ENCODE measurements at regions of chr6 and their contacts with region 1.

Region 1: DNA sequence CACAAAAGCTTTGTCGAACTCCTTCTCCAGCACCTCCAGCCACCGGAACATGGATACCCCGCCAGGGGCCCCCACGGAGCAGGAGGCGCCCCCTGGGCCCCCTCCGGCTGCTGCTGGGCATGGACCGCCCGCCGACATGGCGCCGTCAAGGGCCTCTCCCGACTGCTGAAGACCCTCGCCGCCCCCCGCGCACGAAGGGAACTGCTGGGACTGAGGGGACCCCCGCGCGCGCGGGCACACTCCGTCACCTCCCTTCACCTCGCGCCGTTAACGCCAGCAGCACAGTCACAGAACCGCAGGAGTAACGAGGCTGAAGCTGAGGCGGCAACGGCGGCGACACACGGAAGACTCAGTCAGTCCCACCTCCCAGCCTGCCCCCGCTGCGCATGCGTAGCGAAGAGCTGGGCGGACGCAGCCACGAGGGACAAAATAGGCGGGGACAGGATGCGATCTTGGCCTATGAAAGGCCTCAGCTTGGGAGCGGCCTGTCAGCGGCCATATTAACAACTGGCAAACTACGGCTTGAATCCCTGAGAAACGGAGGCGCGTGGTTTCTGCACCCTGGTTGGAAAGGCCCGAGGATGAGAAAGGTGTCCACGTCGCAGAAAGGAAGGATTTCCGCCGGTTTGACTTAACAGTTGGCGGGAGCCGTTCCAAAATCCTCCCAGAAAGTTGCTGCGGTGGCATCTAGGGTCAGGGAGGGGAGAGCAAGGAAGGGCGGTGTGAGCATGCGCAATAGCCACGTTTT is at the start of gene GOPC:
- DNase-seq: peak; percentile 96
- ATAC-seq: peak; percentile 93
- H3K4me3 ChIP-seq: peak within 1 kb of the TSS; percentile 93
- H3K27ac ChIP-seq: peak within 1 kb of the TSS; percentile 92
- H3K4me1 ChIP-seq: peaks cover 21% of the 10 kb centered on the region; the same call in 1 of the 2 replicates
- H3K27me3 ChIP-seq: no peaks in the 10 kb centered on the region
- CTCF ChIP-seq: 0 out of 2 replicates have a peak, but pooled peaks have one; percentile 12
- total RNA-seq, gene GOPC: 15.8 and 17.1 TPM in 2 replicates

Region 2: GRCh38 chr6:117290173-117290846 is 312.0 kb before region 1 on chr6:
- CTCF ChIA-PET with region 1: no interaction called
- POLR2A ChIA-PET with region 1: no interaction called
- intact Hi-C with region 1: no loop called
- DNase-seq: no peak
- ATAC-seq: no peak
- H3K4me3 ChIP-seq: no peak overlapping the region
- H3K27ac ChIP-seq: no peak overlapping the region
- H3K4me1 ChIP-seq: no peaks in the 10 kb centered on the region
- H3K27me3 ChIP-seq: no peaks in the 10 kb centered on the region
- CTCF ChIP-seq: no peak

Region 3: GRCh38 chr6:117346142-117346930 is 256.0 kb before region 1 on chr6:
- CTCF ChIA-PET with region 1: interaction called, 3 read pairs
- POLR2A ChIA-PET with region 1: interaction called, 4 read pairs
- intact Hi-C with region 1: loop called (anchors 1 kb)
- DNase-seq: peak; percentile 69
- ATAC-seq: no peak
- H3K4me3 ChIP-seq: peak overlapping the region; percentile 42; the same call in 1 of the 2 replicates
- H3K27ac ChIP-seq: no peak overlapping the region
- H3K4me1 ChIP-seq: 0 out of 2 replicates have a peak, but pooled peaks cover 7% of the 10 kb centered on the region
- H3K27me3 ChIP-seq: no peaks in the 10 kb centered on the region
- CTCF ChIP-seq: peak; percentile 64

Region 4: DNA sequence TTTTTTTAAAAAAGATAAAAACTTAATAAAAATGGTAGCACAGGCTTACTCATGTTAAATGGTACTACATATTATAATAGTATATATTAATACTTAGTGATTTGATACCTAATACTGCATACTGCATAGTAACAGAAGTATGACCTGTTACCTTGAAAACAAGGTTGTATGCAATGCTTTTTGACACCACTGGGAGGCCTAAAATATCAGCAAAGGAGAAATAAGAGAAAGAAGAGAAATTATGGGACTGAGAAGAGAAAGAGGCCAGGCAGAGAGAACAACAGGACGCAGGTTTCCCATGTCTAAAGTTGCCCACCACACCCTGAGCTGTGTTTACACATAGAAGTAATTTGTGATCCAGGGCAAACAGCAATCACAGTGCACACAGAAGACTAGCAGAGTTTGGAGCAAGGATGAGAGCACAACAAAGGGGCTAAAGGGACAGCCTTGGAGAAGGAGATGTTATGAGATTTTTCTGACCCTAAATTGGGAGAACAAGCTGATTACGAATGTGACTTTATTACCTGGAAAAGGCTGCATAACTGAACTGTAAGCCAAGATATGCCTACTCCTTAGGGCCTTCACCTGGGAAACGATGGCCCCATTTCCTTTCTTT is 249.8 kb before region 1 on chr6:
- CTCF ChIA-PET with region 1: no interaction called
- POLR2A ChIA-PET with region 1: interaction called, 4 read pairs
- intact Hi-C with region 1: loop called (anchors 1 kb)
- DNase-seq: peak; percentile 68
- ATAC-seq: peak; percentile 67
- H3K4me3 ChIP-seq: no peak overlapping the region
- H3K27ac ChIP-seq: no peak overlapping the region
- H3K4me1 ChIP-seq: peaks cover 4% of the 10 kb centered on the region
- H3K27me3 ChIP-seq: no peaks in the 10 kb centered on the region
- CTCF ChIP-seq: peak; percentile 64

Region 5: DNA sequence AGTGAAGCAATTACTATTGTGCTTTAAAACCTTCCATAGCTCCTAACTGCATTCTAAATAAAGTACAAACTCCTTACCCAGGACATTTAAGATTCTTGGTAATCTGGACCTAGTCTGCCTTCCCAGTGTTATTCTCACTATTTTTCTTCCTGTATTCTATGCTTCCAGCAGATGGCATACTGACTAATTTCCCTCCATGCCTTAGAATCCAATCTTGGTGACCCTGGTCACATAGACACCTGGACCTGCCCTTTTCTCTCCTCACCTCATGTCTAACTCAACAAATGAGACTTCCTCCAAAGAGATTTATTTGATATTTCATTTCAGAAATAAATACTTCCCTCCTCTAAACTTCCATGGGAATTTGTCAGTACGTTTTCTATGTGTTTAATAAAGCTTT is 202.4 kb before region 1 on chr6:
- CTCF ChIA-PET with region 1: no interaction called
- POLR2A ChIA-PET with region 1: no interaction called
- intact Hi-C with region 1: loop called (anchors 5 kb)
- DNase-seq: peak; percentile 41
- ATAC-seq: peak; percentile 51; the same call in 1 of the 2 replicates
- H3K4me3 ChIP-seq: no peak overlapping the region
- H3K27ac ChIP-seq: no peak overlapping the region
- H3K4me1 ChIP-seq: peaks cover 6% of the 10 kb centered on the region; the same call in 1 of the 2 replicates
- H3K27me3 ChIP-seq: no peaks in the 10 kb centered on the region
- CTCF ChIP-seq: peak; percentile 53

Region 6: DNA sequence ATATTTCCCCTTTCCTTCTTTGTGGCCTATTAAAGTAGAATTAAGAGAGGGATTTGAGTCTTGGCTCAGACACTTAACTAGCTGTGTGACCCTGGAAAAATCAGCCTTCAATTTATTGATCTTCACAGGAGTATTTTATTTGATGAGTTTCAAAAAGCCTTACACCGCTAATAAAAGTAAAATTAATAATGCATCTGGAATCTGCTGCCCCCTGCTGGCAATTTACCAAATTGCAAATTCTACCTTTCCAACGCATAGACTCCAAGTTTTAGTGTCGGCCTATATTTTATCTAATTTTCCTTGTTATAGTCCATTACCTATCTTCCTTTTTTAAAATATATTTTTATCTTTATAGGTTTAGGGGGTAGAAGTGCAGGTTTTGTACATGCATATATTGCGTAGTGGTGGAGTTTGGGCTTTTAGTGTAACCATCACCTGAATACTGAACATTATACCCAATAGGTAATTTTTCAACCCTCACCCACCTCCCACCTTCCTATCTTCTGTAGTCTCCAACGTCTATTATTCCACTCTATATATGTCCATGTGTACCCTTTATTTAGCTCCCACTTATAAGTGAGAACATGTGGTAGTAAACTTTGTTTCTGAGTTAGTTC is 46.3 kb before region 1 on chr6:
- CTCF ChIA-PET with region 1: no interaction called
- POLR2A ChIA-PET with region 1: no interaction called
- intact Hi-C with region 1: loop called (anchors 2 kb)
- DNase-seq: peak; percentile 76
- ATAC-seq: peak; percentile 38; the same call in 1 of the 2 replicates
- H3K4me3 ChIP-seq: no peak overlapping the region
- H3K27ac ChIP-seq: no peak overlapping the region
- H3K4me1 ChIP-seq: peaks cover 11% of the 10 kb centered on the region
- H3K27me3 ChIP-seq: no peaks in the 10 kb centered on the region
- CTCF ChIP-seq: peak; percentile 66

Region 7: GRCh38 chr6:117674991-117675657 is 72.8 kb after region 1 on chr6 and contains the start of gene NUS1:
- CTCF ChIA-PET with region 1: no interaction called
- POLR2A ChIA-PET with region 1: no interaction called
- intact Hi-C with region 1: loop called (anchors 5 kb)
- DNase-seq: peak; percentile 94
- ATAC-seq: peak; percentile 97
- H3K4me3 ChIP-seq: peak within 1 kb of the TSS; percentile 78
- H3K27ac ChIP-seq: no peak within 1 kb of the TSS
- H3K4me1 ChIP-seq: peaks cover 25% of the 10 kb centered on the region
- H3K27me3 ChIP-seq: no peaks in the 10 kb centered on the region
- CTCF ChIP-seq: peak; percentile 76
- total RNA-seq, gene NUS1: 12.7 and 18.0 TPM in 2 replicates